ENCODE measurements at regions of chr11 and their contacts with region 1.

Region 1: GRCh38 chr11:2305140-2305840 is 3.5 kb downstream of the TSPAN32 start:
- DNase-seq: peak; percentile 84 to 87
- H3K4me3 ChIP-seq: no peak overlapping the region
- H3K27ac ChIP-seq: peak overlapping the region in 2 of 3 donors; percentile 22 to 85
- H3K4me1 ChIP-seq: peaks cover 10 to 37% of the 10 kb centered on the region in 2 donors
- H3K27me3 ChIP-seq: no peaks in the 10 kb centered on the region
- CTCF ChIP-seq: peak; percentile 81 to 96 (median 90)
- POLR2A ChIP-seq: no peak

Region 2: DNA sequence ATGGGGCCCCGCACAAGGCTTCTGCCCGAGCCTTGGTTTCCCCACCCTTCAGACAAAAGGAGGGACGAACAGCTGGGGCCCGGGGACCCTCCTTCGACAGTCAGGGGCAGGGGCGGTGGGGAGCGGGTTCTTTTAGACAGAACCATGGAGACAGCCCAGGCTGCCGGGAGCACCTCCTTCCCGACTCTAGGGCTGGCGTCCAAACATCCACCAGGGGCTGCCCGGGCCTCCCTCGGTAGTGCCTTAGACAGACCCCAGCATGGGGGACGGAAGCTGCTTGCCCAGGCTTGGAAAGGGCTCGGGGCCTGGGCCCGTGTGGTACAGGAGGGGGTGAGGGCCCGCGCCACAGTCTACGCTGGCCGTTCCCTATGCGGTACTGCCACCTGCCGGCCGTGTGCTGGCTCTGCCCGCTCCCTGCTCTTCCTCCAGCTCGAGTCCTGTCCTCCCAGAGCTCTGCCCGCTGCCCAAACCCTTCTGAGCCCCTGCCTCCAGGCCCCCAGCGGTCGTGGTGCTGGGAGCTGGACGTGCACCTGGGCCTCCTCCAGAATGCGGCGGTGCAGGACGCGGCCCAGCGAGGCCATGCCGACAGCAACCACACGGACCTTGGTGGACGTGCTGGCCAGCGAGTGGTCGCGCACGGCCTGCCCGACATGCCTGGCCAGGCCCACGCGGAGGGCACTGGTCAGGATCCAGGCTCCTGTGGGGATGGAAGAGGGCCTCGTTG is 115.4 kb after region 1 on chr11:
- intact Hi-C with region 1: loop called (anchors 2 kb)
- DNase-seq: peak; percentile 69 to 71
- H3K4me3 ChIP-seq: no peak overlapping the region
- H3K27ac ChIP-seq: no peak overlapping the region
- H3K4me1 ChIP-seq: peaks cover 0 to 13% of the 10 kb centered on the region in 2 donors
- H3K27me3 ChIP-seq: no peaks in the 10 kb centered on the region
- CTCF ChIP-seq: peak; percentile 71 to 95 (median 90)
- POLR2A ChIP-seq: no peak

Region 3: GRCh38 chr11:2535703-2536511 is 230.6 kb after region 1 on chr11:
- intact Hi-C with region 1: no loop called
- DNase-seq: no peak
- H3K4me3 ChIP-seq: no peak overlapping the region
- H3K27ac ChIP-seq: no peak overlapping the region
- H3K4me1 ChIP-seq: peaks cover 5 to 11% of the 10 kb centered on the region in 2 donors
- H3K27me3 ChIP-seq: no peaks in the 10 kb centered on the region
- CTCF ChIP-seq: no peak
- POLR2A ChIP-seq: no peak